H1 (cell line): ENCODE measurements at regions of chr4 and their contacts with region 1.

Region 1: GRCh38 chr4:143558823-143559756 is 45.6 kb downstream of the SMARCA5 start:
- DNase-seq: peak; percentile 68 to 78
- H3K4me3 ChIP-seq: peak overlapping the region; percentile 10 to 43 (median 28); a peak in 6 of 8 replicates
- H3K27ac ChIP-seq: no peak overlapping the region
- H3K4me1 ChIP-seq: no peaks in the 10 kb centered on the region; a peak in 1 of 7 replicates
- H3K27me3 ChIP-seq: no peaks in the 10 kb centered on the region
- CTCF ChIP-seq: peak; percentile 83 to 100 (median 91)
- EP300 ChIP-seq: no peak
- POLR2A ChIP-seq: no peak
- RAD21 ChIP-seq: peak; percentile 92

Region 2: DNA sequence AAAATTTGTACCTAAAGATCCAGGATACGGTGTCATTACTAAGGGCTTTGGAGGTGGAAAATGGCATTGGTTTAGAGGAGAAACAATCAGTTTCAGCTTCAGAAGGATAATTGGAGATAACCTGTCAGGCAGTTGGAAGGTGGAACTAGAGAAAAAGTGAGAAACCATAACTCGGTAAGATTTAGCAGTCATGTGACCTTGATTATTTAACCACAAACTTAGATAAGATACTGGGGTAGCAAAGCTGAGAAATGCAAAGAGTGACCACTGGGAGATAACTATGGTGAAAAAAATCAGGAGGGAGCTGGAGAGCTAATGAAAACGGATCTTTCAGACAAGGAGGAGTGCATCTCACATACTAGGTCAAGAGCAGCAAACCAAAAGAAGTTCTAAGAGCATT is 103.9 kb before region 1 on chr4:
- CTCF ChIA-PET with region 1: no interaction called
- POLR2A ChIA-PET with region 1: no interaction called
- DNase-seq: no peak
- H3K4me3 ChIP-seq: no peak overlapping the region
- H3K27ac ChIP-seq: no peak overlapping the region
- H3K4me1 ChIP-seq: peaks cover 2 to 6% (median 4%) of the 10 kb centered on the region in 4 experiments; a peak in 3 of 7 replicates
- H3K27me3 ChIP-seq: no peaks in the 10 kb centered on the region
- CTCF ChIP-seq: no peak
- EP300 ChIP-seq: no peak
- POLR2A ChIP-seq: no peak
- RAD21 ChIP-seq: no peak

Region 3: DNA sequence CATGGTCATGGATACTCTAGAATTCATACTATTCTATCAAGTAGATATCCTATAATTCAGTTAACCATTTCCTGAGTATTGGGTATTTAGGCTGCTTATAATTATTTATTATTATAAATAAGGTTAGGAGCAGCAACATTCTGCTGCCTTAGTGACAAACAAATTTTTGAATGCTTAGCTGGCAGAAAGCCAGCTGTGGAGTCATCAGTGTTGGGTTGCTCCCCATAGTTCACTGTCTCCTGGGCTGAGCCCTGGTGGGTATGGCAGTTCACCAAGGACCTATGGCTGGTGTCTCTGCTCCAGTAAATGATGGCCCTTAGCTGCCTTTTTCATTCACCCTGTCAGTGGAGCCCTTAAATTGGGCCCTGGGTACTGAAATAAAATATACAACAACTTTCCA is 16.2 kb after region 1 on chr4:
- CTCF ChIA-PET with region 1: interaction called, 55 read pairs
- POLR2A ChIA-PET with region 1: interaction called, 6 read pairs
- DNase-seq: no peak
- H3K4me3 ChIP-seq: no peak overlapping the region
- H3K27ac ChIP-seq: no peak overlapping the region
- H3K4me1 ChIP-seq: no peaks in the 10 kb centered on the region
- H3K27me3 ChIP-seq: no peaks in the 10 kb centered on the region
- CTCF ChIP-seq: no peak
- EP300 ChIP-seq: no peak
- POLR2A ChIP-seq: no peak
- RAD21 ChIP-seq: no peak

Region 4: GRCh38 chr4:143581331-143581946 is 22.3 kb after region 1 on chr4:
- CTCF ChIA-PET with region 1: interaction called, 55 read pairs
- POLR2A ChIA-PET with region 1: interaction called, 6 read pairs
- DNase-seq: no peak
- H3K4me3 ChIP-seq: no peak overlapping the region
- H3K27ac ChIP-seq: no peak overlapping the region
- H3K4me1 ChIP-seq: no peaks in the 10 kb centered on the region
- H3K27me3 ChIP-seq: no peaks in the 10 kb centered on the region
- CTCF ChIP-seq: peak; percentile 33 to 62 (median 51)
- EP300 ChIP-seq: no peak
- POLR2A ChIP-seq: no peak
- RAD21 ChIP-seq: peak; percentile 64 to 72